GM10248 (cell line): ENCODE measurements at regions of chr3 and their contacts with region 1.

Region 1: DNA sequence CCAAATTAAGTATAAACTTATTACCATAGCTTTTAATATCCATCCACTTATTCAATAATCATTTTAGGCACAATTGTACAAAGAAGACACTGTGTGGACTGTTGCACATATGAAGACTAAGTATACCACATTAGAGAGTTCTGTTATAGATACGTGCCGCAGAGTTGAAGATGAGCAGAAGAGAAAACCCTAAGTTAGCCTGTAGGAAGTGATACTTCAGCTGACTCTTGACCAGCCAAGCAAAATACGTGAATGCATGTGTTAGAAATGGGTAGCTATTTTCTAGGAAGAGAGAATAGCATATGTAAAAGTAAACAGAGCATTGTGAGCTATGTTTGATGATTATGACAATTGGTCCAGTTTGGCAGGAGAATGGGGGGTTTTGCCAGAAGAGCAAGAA is 272.0 kb upstream of the ATP11B start:
- DNase-seq: no peak
- CTCF ChIP-seq: no peak

Region 2: DNA sequence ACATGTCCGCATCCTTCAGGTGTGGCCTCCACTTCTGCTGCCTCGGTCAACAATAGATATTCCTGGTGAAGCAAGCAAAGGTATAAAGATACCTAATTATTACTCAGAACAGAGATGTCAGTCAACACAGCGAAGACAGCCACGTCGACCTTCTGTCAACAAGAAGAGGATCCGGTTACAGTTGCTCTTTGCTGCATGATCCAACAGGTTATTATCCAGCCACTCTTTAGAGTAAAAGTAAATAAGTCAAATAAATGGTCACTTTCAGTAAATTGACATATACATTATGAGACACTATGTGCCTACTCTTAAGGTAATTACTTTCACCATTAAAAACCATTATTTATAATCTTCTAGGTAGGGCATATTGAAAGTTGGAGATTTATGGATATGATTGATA is 84.8 kb before region 1 on chr3:
- CTCF ChIA-PET with region 1: no interaction called
- POLR2A ChIA-PET with region 1: no interaction called
- DNase-seq: no peak
- CTCF ChIP-seq: no peak

Region 3: DNA sequence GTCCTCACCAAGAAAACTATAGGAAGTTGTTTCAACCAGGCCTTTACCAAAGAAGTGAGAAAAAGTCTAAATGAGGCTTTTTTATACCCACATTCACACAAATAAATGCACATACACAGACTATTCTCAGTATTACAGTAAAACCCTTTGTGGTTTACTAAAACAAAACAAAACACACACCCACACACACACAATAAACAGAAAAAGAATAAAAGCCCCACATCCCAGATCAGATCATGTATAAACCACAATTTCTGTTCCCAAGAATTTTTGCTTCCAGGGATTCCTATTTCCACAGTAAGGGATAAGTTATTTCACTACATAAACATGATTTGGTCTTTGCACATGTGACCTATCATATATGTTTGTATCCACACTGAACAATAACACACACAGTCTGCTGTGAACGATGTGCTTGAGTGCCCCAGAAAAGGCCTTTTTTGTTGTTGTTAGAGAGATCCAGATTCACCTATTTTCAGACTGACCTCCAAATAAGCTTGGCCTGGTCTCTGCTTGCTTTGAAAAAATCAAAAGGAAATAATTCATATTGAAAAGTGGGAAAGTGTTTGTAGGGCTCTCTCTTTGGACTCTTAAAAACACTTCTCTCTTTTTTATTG is 11.4 kb before region 1 on chr3:
- CTCF ChIA-PET with region 1: interaction called, 10 read pairs
- POLR2A ChIA-PET with region 1: no interaction called
- DNase-seq: no peak
- CTCF ChIP-seq: no peak

Region 4: GRCh38 chr3:183148056-183148455 is 626.7 kb after region 1 on chr3:
- CTCF ChIA-PET with region 1: no interaction called
- POLR2A ChIA-PET with region 1: no interaction called
- DNase-seq: no peak
- CTCF ChIP-seq: no peak

Region 5: DNA sequence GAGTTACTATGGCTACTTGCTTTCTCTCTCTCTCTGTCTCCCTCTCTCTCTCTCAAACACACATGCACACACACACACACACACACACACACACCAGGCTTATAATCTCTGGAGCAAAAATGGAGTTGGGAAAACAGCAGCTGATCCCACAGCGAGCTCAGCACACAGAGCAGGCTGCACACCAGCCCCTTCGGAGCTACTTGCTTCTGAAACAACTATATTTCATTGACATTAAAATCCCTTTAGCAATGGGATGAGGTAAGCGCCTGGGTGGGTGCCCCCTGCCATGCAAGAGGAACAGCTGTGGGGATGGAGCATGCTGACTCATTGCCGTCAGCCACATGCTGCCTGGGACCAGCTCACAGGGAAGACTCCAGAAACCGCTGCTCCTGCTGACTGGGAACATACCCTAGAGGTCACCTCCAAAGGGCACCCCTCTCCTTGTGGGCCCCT is 777.4 kb after region 1 on chr3:
- CTCF ChIA-PET with region 1: no interaction called
- POLR2A ChIA-PET with region 1: no interaction called
- DNase-seq: no peak
- CTCF ChIP-seq: no peak